Brain microvascular endothelial cell (primary cell): ENCODE measurements at regions of chr18 and their contacts with region 1.

Region 1: DNA sequence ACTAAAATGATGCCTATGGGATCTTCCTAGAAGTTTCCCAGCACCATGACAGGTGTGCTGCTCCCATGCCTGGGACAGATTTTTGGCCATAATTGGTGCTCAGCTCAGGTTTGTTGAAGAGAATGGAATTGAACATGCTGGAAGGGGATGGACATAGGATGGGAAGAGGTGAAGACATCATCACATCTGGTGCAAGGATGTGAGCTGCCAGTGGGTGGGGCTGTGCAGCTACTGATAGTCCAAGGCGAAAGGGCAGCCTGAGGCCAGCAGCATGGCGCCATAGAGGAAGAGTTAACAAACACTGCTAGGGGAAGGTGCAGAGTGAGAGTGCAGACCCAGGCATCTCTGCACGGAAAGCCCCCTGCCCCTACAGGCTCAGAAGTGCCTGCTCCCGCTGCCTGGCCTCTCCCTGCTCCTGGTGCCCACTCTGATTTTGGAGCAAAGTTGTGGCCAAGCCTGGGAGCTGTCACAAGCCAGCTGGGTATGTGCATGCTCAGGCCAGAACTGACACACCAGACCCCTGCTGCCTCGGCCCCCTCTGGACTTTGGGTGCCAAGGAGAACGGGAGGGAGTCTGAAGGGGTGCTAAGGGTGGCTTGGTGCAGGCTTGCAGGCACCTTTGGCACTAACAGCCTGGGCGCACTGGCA is 178.6 kb downstream of the ZBTB7C start:
- DNase-seq: peak; percentile 60
- H3K4me3 ChIP-seq: no peak overlapping the region
- H3K27ac ChIP-seq: no peak overlapping the region
- H3K27me3 ChIP-seq: peaks cover 4% of the 10 kb centered on the region
- CTCF ChIP-seq: peak; percentile 82

Region 2: GRCh38 chr18:48445540-48445939 is 214.9 kb after region 1 on chr18:
- in situ Hi-C with region 1: loop called (anchors 25 kb)
- DNase-seq: peak; percentile 82
- H3K4me3 ChIP-seq: no peak overlapping the region
- H3K27ac ChIP-seq: no peak overlapping the region
- H3K27me3 ChIP-seq: peaks cover 46% of the 10 kb centered on the region
- CTCF ChIP-seq: peak; percentile 99